Body of pancreas (tissue), 4 donors: ENCODE measurements at regions of chr18 and their contacts with region 1.

Region 1: GRCh38 chr18:76803814-76804213 is 18.5 kb upstream of the ZNF236 start:
- DNase-seq: peak; percentile 60 to 69 (median 62)
- ATAC-seq: peak; percentile 51
- H3K4me3 ChIP-seq: no peak overlapping the region
- H3K27ac ChIP-seq: no peak overlapping the region
- H3K4me1 ChIP-seq: peaks cover 11% of the 10 kb centered on the region
- H3K27me3 ChIP-seq: no peaks in the 10 kb centered on the region
- CTCF ChIP-seq: peak; percentile 64 to 80 (median 71)
- POLR2A ChIP-seq: no peak

Region 2: DNA sequence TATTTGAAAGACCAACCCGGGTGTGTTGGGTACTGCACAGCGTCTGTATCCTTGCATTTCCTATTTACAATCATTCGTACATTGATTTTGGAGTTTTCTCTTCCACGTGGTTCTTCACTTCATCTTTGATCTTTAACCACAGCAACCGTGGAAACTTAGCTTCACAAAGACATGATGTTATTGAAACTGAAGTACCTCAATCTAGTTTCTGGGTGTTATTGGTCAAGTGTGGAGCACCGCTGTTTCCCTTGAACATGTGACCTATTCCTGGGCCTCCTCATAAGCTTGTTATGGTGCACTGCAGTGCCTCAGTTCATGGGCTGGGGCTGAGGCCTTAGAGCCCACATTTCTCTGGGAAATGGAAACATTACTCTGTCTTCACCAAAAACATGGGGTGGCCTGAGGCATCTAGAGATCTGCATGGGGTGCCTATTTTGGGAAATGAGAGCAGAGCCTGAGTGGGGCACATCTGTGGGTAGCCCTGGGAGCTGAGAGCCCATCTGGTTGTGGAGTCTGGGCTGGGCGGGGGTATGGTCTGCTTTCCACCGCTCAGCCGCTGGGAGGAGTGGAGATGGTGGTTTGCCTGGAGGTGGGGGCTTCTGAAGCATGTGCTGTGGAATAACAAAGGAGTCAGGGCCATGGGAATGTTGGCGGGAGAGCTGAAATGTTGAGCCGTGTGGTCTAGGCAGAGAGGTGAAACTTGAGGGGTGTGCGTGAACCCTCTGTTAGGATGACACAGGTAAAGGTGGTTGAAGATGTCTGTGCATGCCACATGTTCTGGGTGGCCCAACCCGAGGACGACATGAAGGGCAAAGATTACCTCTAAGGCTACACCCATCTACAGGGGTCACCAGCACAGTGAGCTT is 55.9 kb after region 1 on chr18:
- intact Hi-C with region 1: loop called (anchors 10 kb)
- DNase-seq: no peak
- ATAC-seq: no peak
- H3K4me3 ChIP-seq: no peak overlapping the region
- H3K27ac ChIP-seq: peak overlapping the region in 1 of 4 donors; percentile 29
- H3K4me1 ChIP-seq: peaks cover 7% of the 10 kb centered on the region
- H3K27me3 ChIP-seq: no peaks in the 10 kb centered on the region
- CTCF ChIP-seq: no peak
- POLR2A ChIP-seq: no peak

Region 3: DNA sequence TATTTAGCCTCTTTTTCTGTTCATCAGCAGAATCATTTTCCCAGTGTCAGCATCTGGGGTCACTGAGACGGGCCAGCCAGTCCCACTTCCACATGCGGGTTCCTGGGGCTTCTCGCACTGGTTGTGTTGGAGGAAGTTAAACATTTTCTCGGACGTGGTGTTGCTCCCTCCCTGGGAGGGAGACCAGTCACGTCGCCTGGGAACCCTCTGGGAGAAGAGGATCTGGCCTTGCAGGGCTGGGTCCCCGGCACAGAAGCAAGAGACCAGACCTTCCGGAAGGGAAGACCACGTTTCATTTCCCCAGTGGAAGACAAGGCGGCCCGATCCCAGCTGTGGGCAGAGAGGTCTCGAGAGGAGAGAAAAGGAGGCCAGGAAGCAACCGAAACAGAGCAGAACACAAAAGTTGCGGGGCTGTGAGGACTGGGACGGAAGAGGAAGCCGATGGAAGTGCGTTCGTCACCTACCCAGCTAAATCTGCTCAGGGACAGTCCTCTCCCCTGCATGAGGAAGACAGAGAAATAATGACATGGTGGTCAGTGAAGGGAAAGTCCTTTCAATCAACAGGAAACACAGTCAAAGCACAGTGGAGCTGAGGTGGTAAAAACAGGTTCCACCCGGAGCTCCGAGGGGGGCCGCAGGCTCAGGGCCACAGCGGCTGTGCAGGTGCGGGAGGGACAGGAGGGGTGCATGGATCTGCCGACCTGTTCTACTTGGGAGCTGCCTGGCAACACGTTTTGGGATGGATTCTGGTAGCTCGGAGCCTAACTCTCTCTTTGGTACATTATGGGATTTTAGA is 184.4 kb after region 1 on chr18:
- intact Hi-C with region 1: loop called (anchors 5 kb)
- DNase-seq: peak in 1 of 4 donors; percentile 59
- ATAC-seq: no peak
- H3K4me3 ChIP-seq: no peak overlapping the region
- H3K27ac ChIP-seq: peak overlapping the region in 1 of 4 donors; percentile 43
- H3K4me1 ChIP-seq: peaks cover 3% of the 10 kb centered on the region
- H3K27me3 ChIP-seq: no peaks in the 10 kb centered on the region
- CTCF ChIP-seq: no peak
- POLR2A ChIP-seq: peak in 1 of 3 donors; percentile 22